ENCODE measurements at regions of chr6 and their contacts with region 1.

Region 1: DNA sequence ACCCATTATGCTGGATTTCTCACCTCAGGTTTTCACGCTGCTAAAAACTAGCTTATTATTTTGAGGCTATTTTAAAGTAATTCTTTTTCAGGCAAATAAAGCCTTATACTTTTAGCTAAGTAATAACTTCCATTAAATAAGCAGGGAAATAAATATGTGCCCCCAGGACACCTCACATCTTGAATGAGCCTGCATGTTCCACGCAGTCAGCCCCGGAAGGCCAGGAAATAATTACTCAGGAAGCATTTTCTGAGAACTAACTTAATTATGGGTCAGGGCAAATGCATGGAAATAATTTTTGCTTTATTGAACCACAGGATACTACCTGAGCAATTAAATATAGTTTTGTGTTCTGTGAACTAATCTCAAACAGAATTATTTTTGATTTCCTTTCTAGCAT is 41.1 kb downstream of the STX7 start:
- DNase-seq: no peak
- ATAC-seq: no peak
- H3K4me3 ChIP-seq: no peak overlapping the region
- H3K4me3 Mint-ChIP-seq: no peak overlapping the region
- H3K27ac ChIP-seq: peak overlapping the region in 1 of 2 donors; percentile 0
- H3K27ac Mint-ChIP-seq: no peak overlapping the region
- H3K4me1 ChIP-seq: peaks cover 5 to 15% of the 10 kb centered on the region in 2 donors
- H3K4me1 Mint-ChIP-seq: peaks cover 12% of the 10 kb centered on the region
- H3K27me3 ChIP-seq: no peaks in the 10 kb centered on the region
- H3K27me3 Mint-ChIP-seq: no peaks in the 10 kb centered on the region
- CTCF ChIP-seq: no peak

Region 2: DNA sequence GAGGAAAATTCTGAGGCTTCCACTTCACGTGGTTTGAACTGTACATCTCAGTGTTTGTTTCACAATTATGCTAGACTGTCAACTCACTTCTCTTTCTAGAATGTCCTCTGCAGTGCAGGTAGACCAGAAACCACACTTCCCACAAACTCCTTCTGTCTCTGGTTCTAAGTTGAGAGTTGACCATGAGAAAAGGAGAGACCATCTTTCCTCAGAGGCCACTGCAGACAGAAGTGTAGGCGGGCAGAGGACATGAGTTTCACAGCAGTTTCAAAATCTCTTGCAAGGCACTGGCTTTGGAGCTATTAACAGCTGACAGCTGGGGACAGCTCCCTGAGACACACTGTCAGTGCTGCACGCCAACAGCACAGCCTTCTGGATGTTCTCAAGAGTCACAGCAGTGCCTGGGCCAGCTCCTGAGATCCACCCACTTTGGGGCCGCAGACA is 15.1 kb before region 1 on chr6:
- CTCF ChIA-PET with region 1: interaction called, 3 read pairs
- POLR2A ChIA-PET with region 1: no interaction called
- intact Hi-C with region 1: loop called (anchors 2 kb)
- DNase-seq: no peak
- ATAC-seq: no peak
- H3K4me3 ChIP-seq: no peak overlapping the region
- H3K4me3 Mint-ChIP-seq: no peak overlapping the region
- H3K27ac ChIP-seq: peak overlapping the region in 1 of 2 donors; percentile 51
- H3K27ac Mint-ChIP-seq: peak overlapping the region; percentile 85
- H3K4me1 ChIP-seq: peaks cover 0 to 14% of the 10 kb centered on the region in 2 donors
- H3K4me1 Mint-ChIP-seq: peaks cover 38% of the 10 kb centered on the region
- H3K27me3 ChIP-seq: no peaks in the 10 kb centered on the region
- H3K27me3 Mint-ChIP-seq: no peaks in the 10 kb centered on the region
- CTCF ChIP-seq: no peak

Measured in B cell (primary cell).